T-cell (primary cell): ENCODE measurements at regions of chr5 and their contacts with region 1.

Region 1: DNA sequence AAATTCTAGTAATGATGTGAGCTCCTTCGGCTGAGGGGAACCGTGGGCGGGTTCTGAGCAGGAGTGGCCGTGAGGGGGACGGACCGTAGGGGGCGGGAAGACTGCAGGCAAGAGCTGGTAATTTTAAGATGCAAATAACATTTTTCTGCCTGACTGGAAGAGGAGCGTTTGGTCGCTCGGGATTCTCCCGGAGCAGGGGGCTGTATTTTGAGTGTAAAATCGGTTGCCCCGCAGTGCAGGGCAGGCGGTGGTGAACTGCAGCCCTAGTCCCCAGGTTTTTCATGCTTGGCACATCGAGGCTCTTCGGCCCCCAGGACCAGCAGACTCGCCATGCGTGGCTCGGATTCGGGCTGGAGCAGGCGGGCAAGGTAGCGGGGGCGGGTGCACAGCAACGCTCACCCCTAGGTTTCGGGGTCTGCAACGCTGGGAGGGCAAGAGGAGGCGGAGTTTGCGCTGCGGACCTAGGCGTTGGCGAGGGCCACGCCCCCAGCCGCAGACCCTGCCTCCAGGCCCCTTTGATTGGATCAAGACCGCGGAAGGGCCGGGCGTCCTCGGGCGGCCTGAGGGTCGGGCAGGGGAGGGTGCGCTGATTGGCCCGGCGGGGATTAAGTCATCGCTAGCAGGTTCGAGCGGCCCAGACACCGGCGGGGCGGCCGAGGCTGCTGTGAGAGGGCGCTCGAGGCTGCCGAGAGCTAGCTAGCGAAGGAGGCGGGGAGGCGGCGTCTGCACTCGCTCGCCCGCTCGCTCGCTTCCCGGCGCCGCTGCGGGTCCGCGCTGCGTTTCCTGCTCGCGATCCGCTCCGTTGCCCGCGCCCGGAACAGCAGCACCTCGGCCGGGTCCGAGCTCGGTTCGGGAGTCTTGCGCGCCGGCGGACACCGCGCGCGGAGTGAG is at the start of gene ARHGAP26:
- DNase-seq: peak; percentile 81 to 95 (median 87)
- ATAC-seq: peak; percentile 89 to 93 (median 92)
- H3K4me3 ChIP-seq: peak within 1 kb of the TSS; percentile 69 to 89
- H3K4me3 Mint-ChIP-seq: peak within 1 kb of the TSS; percentile 83 to 95 (median 91)
- H3K27ac ChIP-seq: peak within 1 kb of the TSS; percentile 67
- H3K27ac Mint-ChIP-seq: peak within 1 kb of the TSS; percentile 81 to 92
- H3K4me1 ChIP-seq: peaks cover 14 to 26% of the 10 kb centered on the region in 2 experiments
- H3K4me1 Mint-ChIP-seq: peaks cover 37 to 43% (median 40%) of the 10 kb centered on the region in 3 donors
- H3K27me3 ChIP-seq: no peaks in the 10 kb centered on the region
- H3K27me3 Mint-ChIP-seq: no peaks in the 10 kb centered on the region
- total RNA-seq, gene ARHGAP26: 22.8 to 49.3 (median 28.3) TPM

Region 2: GRCh38 chr5:142783601-142784341 is 13.8 kb after region 1 on chr5:
- CTCF ChIA-PET with region 1: interaction called in 1 of 2 experiments, 13 read pairs
- POLR2A ChIA-PET with region 1: interaction called in 1 of 2 experiments, 9 read pairs
- DNase-seq: peak in 28 of 35 experiments; percentile 8 to 63 (median 28)
- ATAC-seq: peak; percentile 37 to 68 (median 60)
- H3K4me3 ChIP-seq: peak overlapping the region in 1 of 2 donors; percentile 25
- H3K4me3 Mint-ChIP-seq: peak overlapping the region; percentile 11 to 67 (median 65)
- H3K27ac ChIP-seq: peak overlapping the region; percentile 60
- H3K27ac Mint-ChIP-seq: peak overlapping the region; percentile 60 to 68
- H3K4me1 ChIP-seq: peaks cover 7 to 75% of the 10 kb centered on the region in 2 experiments
- H3K4me1 Mint-ChIP-seq: peaks cover 70 to 78% (median 74%) of the 10 kb centered on the region in 3 donors
- H3K27me3 ChIP-seq: no peaks in the 10 kb centered on the region
- H3K27me3 Mint-ChIP-seq: no peaks in the 10 kb centered on the region

Region 3: DNA sequence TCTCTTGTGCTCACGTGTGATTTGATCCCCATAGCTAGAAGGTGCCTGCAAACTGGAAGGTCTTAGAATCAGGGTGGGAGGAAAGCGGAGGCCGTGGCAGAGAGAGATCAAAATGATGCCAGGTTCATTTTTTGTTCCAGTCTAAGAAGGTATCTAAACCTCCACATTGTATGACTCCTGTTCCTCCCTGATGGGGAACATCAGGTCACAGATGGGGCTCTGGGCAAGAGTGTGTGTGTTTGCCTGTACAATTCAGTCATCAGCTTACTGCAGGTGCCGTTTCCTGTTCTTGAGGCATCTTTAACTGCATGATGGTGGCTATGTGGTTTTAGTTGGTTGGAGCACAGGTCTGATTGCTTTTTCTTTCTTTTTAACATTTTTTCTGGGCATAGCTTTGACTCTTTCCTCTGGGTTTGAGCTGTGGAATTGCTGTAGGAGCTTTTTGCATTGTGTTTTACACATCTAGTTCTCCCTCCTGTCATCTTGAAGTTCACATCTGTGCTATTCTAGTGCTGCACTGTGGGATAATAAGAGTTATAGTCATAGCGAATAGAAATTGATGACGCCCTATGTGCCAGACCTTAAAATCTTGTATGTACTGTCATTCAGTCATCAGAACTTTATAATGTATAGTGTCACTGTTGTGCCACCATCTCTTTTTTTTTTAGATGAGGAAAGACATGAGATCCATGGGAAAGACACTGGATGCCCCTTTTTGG is 30.9 kb after region 1 on chr5:
- CTCF ChIA-PET with region 1: interaction called in 1 of 2 experiments, 28 read pairs
- POLR2A ChIA-PET with region 1: interaction called, 6 to 8 read pairs
- DNase-seq: peak; percentile 7 to 74 (median 37)
- ATAC-seq: peak; percentile 77 to 88 (median 82)
- H3K4me3 ChIP-seq: peak overlapping the region; percentile 1 to 27
- H3K4me3 Mint-ChIP-seq: peak overlapping the region; percentile 66 to 84 (median 68)
- H3K27ac ChIP-seq: peak overlapping the region; percentile 71
- H3K27ac Mint-ChIP-seq: peak overlapping the region; percentile 89 to 97
- H3K4me1 ChIP-seq: peaks cover 50% of the 10 kb centered on the region in 2 experiments
- H3K4me1 Mint-ChIP-seq: peaks cover 61 to 67% (median 66%) of the 10 kb centered on the region in 3 donors
- H3K27me3 ChIP-seq: no peaks in the 10 kb centered on the region
- H3K27me3 Mint-ChIP-seq: no peaks in the 10 kb centered on the region

Region 4: DNA sequence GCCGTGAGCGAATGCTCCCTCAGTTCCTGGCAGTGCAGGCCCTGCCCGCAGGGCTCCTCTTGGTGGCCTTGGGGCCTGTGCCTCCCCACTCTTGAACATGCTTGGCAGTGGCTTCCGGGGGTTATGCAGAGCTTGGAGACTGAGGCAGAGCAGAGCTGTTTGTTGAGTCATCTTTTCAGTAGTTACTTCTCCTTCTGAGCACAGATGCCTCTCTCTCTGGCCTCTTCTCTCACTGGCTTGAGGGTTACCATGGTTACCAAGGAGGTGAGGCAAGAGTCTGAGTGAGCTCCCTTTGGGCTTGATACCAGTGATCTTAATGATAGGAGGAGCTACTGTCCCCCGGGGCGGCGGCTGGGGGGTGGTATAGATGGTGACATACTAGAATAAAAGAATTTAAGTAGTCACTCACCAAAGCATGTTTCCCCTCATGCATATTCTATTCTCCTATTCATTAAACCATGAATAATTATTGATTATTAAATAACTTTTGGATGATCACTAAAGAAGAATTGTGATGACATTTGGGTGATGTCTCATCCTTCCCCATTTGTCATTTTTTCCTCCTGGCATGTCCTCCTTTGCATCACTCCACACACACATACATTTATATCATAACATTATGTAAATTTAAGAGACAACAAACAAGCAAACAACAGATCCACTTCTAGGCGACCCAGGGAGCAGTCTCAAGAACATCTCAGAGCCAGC is 111.2 kb after region 1 on chr5:
- CTCF ChIA-PET with region 1: interaction called in 1 of 2 experiments, 10 read pairs
- POLR2A ChIA-PET with region 1: no interaction called
- DNase-seq: peak in 2 of 35 experiments; percentile 7 to 29
- ATAC-seq: no peak
- H3K4me3 ChIP-seq: no peak overlapping the region
- H3K4me3 Mint-ChIP-seq: no peak overlapping the region
- H3K27ac ChIP-seq: no peak overlapping the region
- H3K27ac Mint-ChIP-seq: no peak overlapping the region
- H3K4me1 ChIP-seq: no peaks in the 10 kb centered on the region
- H3K4me1 Mint-ChIP-seq: peaks cover 6 to 14% (median 7%) of the 10 kb centered on the region in 3 donors
- H3K27me3 ChIP-seq: no peaks in the 10 kb centered on the region
- H3K27me3 Mint-ChIP-seq: no peaks in the 10 kb centered on the region